ENCODE measurements at regions of chr16 and their contacts with region 1.

Region 1: GRCh38 chr16:13866073-13866472 is 53.9 kb upstream of the ERCC4 start:
- DNase-seq: peak; percentile 65 to 84
- ATAC-seq: peak; percentile 78
- H3K4me3 ChIP-seq: no peak overlapping the region
- H3K27ac ChIP-seq: no peak overlapping the region
- H3K4me1 ChIP-seq: peaks cover 4 to 12% of the 10 kb centered on the region in 2 donors
- H3K27me3 ChIP-seq: no peaks in the 10 kb centered on the region

Region 2: DNA sequence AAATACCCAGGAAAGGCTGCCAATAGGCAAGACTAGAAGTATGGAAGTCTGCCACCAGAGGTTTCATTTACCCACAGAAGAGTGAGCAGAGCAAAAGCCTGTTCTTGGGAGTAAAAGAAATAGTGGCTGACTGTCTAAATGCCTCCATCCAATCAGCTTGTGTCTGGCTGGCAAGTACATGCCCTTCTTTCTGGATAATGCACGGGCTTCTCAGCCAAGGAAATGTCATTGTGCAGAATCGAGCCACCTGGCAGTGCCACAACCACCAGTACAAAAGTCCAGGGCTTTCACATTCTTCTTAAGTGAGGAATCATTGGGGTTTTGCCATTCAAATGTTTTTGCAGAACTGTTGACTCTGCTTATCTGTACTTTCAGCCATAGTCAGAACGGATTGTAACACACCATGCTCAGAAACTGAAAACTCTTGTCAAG is 43.8 kb after region 1 on chr16:
- intact Hi-C with region 1: loop called (anchors 5 kb)
- DNase-seq: peak; percentile 84 to 87
- ATAC-seq: peak; percentile 91
- H3K4me3 ChIP-seq: no peak overlapping the region
- H3K27ac ChIP-seq: no peak overlapping the region
- H3K4me1 ChIP-seq: peaks cover 0 to 1% of the 10 kb centered on the region in 2 donors
- H3K27me3 ChIP-seq: no peaks in the 10 kb centered on the region

Region 3: GRCh38 chr16:14088155-14088753 is 222.2 kb after region 1 on chr16:
- intact Hi-C with region 1: loop called in 1 of 2 experiments (anchors 10 kb)
- DNase-seq: no peak
- ATAC-seq: peak; percentile 15
- H3K4me3 ChIP-seq: no peak overlapping the region
- H3K27ac ChIP-seq: no peak overlapping the region
- H3K4me1 ChIP-seq: peaks cover 4 to 7% of the 10 kb centered on the region in 2 donors
- H3K27me3 ChIP-seq: no peaks in the 10 kb centered on the region

Region 4: GRCh38 chr16:14101415-14101814 is 235.3 kb after region 1 on chr16:
- intact Hi-C with region 1: no loop called
- DNase-seq: no peak
- ATAC-seq: no peak
- H3K4me3 ChIP-seq: no peak overlapping the region
- H3K27ac ChIP-seq: no peak overlapping the region
- H3K4me1 ChIP-seq: peaks cover 1 to 9% of the 10 kb centered on the region in 2 donors
- H3K27me3 ChIP-seq: no peaks in the 10 kb centered on the region

Measured in aorta (tissue), 5 donors.